ENCODE measurements at regions of chr2 and their contacts with region 1.

Region 1: DNA sequence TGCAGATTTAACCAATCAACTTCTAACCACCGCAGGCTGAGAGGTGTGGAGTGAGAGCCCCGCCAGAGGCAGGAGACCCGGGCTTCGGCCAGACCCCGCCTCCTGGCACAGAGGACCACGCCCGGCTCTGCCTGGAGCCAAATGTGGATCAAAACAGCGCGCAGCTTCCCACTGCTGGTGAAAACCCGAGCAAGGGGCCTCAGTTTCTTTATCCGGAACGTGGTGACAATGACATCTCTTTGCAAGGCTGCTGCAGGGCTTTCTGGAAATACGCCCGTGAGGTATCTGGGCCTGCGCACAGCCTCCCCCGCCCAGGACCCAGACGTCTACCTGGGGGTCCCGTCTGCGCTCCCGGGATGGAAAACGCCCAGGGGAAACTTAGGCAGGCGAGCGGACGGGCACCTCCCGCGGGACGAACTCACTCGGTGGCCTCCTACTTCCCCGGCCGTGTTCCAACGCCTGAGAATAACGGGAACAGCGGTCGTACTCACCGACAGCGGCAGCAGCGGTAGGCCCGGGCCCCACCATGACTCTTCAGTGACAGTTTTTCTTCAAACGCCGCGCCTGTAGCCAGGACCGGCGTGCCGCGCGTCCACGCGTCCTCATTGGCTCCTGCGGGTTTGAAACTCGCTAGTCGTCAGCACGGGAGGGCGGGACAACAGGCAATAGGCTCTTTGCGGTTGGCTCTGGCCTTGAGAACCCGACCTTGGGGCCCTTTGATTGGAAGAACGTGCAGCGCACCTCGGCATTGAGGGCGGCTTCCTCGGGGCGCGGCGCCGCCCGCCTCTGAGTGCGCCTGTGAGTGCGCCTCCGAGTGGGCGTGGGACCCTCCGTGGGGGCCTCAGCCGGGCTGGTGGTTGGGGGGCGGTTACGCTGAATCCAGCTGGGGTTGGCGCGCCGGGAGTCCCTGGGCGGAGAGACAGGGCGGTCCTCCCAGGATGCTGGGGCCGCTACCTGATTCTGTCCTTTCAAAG is at the start of gene CKAP2L:
- DNase-seq: peak; percentile 85 to 98 (median 94)
- ATAC-seq: peak; percentile 98
- H3K4me3 ChIP-seq: peak within 1 kb of the TSS; percentile 72 to 74
- H3K4me3 Mint-ChIP-seq: peak within 1 kb of the TSS; percentile 92
- H3K27ac ChIP-seq: peak within 1 kb of the TSS; percentile 5 to 54
- H3K27ac Mint-ChIP-seq: peak within 1 kb of the TSS; percentile 70
- H3K4me1 ChIP-seq: peaks cover 12% of the 10 kb centered on the region
- H3K4me1 Mint-ChIP-seq: peaks cover 27% of the 10 kb centered on the region
- H3K27me3 ChIP-seq: no peaks in the 10 kb centered on the region
- H3K27me3 Mint-ChIP-seq: no peaks in the 10 kb centered on the region
- CTCF ChIP-seq: no peak
- total RNA-seq, gene CKAP2L: 0.50 to 0.57 TPM

Region 2: GRCh38 chr2:112645310-112646101 is 118.9 kb before region 1 on chr2 and contains the start of gene SLC20A1:
- CTCF ChIA-PET with region 1: no interaction called
- POLR2A ChIA-PET with region 1: no interaction called
- intact Hi-C with region 1: loop called (anchors 1 to 2 kb)
- DNase-seq: peak; percentile 96 to 100 (median 98)
- ATAC-seq: peak; percentile 91
- H3K4me3 ChIP-seq: peak within 1 kb of the TSS; percentile 84 to 90
- H3K4me3 Mint-ChIP-seq: peak within 1 kb of the TSS; percentile 85
- H3K27ac ChIP-seq: peak within 1 kb of the TSS; percentile 91
- H3K27ac Mint-ChIP-seq: peak within 1 kb of the TSS; percentile 89
- H3K4me1 ChIP-seq: peaks cover 50% of the 10 kb centered on the region
- H3K4me1 Mint-ChIP-seq: peaks cover 56% of the 10 kb centered on the region
- H3K27me3 ChIP-seq: no peaks in the 10 kb centered on the region
- H3K27me3 Mint-ChIP-seq: no peaks in the 10 kb centered on the region
- CTCF ChIP-seq: peak; percentile 55
- total RNA-seq, gene SLC20A1: 144 to 145 TPM